Heart left ventricle (tissue), 16 donors: ENCODE measurements at regions of chr21 and their contacts with region 1.

Region 1: DNA sequence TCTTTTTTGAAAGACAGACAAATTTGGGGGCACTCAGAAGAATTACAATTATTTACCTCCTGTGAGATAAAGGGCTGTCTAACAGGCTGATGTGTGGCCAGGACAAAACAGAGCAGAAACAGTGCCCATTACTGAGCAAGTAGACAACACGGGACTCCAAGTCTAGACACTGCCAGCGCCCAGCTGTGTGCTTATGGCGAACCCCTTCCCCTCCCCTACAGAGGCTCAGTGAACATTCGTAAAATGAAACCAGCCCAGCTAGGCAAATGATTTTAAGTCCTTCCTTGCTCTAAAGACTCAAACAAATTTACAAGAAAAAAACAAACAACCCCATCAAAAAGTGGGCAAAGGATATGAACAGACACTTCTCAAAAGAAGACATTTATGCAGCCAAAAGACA is 91.1 kb downstream of the RUNX1 start:
- DNase-seq: no peak
- ATAC-seq: no peak
- H3K4me3 ChIP-seq: no peak overlapping the region
- H3K27ac ChIP-seq: no peak overlapping the region
- H3K4me1 ChIP-seq: peaks cover 0 to 4% (median 0%) of the 10 kb centered on the region in 12 donors
- H3K27me3 ChIP-seq: peaks cover 0 to 6% (median 0%) of the 10 kb centered on the region in 9 donors
- CTCF ChIP-seq: no peak
- POLR2A ChIP-seq: no peak

Region 2: DNA sequence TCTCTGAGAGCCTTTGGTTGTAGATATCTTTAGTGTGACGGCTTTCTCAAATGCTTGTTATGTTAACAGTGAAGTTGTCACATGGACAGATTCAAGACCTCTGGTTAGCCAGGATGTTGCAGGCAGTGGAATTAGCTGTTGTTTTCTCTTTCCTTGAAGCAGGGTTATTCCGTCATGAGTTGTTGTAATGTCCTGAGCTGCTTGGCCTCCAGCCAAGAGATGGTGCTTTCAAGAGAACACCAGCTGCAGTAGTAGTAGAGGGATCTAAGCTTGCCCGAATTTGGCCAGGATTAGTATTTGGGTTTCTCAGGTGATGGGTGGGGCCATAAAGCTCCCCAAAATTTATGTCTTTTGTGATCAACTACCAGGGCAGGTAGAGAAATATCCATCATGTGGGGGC is 459.4 kb before region 1 on chr21:
- intact Hi-C with region 1: no loop called
- DNase-seq: peak in 1 of 5 donors; percentile 49
- ATAC-seq: peak in 2 of 4 donors; percentile 39 to 53
- H3K4me3 ChIP-seq: no peak overlapping the region
- H3K27ac ChIP-seq: no peak overlapping the region
- H3K4me1 ChIP-seq: no peaks in the 10 kb centered on the region
- H3K27me3 ChIP-seq: no peaks in the 10 kb centered on the region
- CTCF ChIP-seq: no peak
- POLR2A ChIP-seq: no peak

Region 3: GRCh38 chr21:34971656-34972055 is 13.6 kb after region 1 on chr21:
- intact Hi-C with region 1: loop called in 1 of 10 experiments (anchors 1 kb)
- DNase-seq: no peak
- ATAC-seq: no peak
- H3K4me3 ChIP-seq: no peak overlapping the region
- H3K27ac ChIP-seq: no peak overlapping the region
- H3K4me1 ChIP-seq: peaks cover 0 to 24% (median 0%) of the 10 kb centered on the region in 12 donors
- H3K27me3 ChIP-seq: no peaks in the 10 kb centered on the region
- CTCF ChIP-seq: no peak
- POLR2A ChIP-seq: no peak